CD4-positive, alpha-beta memory T cell (primary cell): ENCODE measurements at regions of chr2 and their contacts with region 1.

Region 1: DNA sequence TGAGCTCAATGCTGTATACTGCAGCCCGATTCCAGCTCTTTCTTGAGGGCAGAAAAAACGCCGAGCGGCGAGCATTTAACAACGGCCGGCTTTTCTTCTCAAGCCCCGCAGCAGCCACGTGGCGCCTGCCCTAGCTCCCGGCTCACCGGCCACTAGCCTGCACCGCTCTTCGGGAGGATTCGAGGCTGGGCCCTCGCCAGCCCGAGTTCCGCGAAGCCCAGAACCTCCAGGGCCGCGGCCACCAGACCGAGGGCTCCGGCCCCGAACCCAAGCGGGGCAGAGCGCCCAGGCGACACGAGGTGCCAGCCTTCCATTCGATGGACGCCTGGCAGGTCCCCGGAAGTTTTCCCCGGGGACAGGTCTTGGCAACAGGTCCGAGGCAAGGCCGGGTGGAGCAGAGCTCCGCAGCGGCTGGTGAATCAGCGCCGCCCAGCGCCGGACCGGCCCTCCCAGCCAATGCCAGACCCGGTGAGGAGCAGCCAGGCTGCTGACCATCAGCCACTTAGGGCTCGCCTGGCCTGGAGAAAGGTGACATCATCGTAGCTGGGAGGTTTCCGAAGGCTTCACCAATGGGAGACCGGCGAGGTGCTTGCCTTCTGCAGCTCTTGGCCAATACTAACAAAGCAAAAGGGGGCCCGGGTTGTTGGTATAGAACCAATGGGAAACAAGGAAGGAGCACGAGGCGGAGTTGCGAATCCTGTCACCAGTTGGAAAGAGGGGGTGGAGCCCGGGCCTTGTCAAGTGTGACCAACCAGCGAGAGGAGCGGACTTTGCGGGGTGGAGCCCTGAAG is 544 bp upstream of the MXD1 start:
- DNase-seq: peak; percentile 99 to 100 (median 100)
- H3K4me3 ChIP-seq: peak overlapping the region; percentile 81 to 88
- H3K4me3 Mint-ChIP-seq: peak overlapping the region; percentile 85 to 89 (median 87)
- H3K27ac ChIP-seq: peak overlapping the region; percentile 96
- H3K27ac Mint-ChIP-seq: peak overlapping the region; percentile 90 to 96 (median 94)
- H3K4me1 ChIP-seq: peaks cover 30% of the 10 kb centered on the region
- H3K4me1 Mint-ChIP-seq: peaks cover 7 to 44% (median 19%) of the 10 kb centered on the region in 4 donors
- H3K27me3 ChIP-seq: no peaks in the 10 kb centered on the region
- H3K27me3 Mint-ChIP-seq: no peaks in the 10 kb centered on the region

Region 2: DNA sequence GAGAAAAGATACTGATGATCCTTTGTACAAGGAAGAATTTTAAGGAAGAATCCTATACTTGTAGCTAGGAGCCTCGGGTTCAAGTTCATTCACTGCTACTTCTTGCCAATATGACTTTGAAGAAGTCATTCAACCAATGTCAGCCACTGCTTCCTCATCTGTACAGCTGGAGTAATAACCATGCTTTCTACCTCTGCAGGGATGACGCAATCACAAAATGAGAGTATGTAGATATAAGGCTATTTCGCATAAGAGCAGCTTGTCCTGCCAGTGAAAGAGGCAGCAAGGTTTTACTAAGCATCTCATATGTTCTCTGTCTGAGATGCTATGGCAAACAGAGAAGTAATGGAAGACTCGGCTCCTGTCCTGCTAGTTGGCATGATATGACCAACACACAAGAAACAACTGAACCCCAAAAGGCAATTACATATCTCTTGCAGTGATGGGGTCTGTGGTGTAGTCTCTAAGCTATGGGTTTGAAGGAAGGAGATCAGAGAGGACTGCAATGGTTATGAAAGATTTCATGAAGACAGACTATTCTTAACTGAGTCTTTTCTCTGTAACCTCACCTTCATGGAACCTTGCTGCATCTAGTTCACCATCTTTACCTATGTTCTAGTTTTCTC is 280.1 kb before region 1 on chr2:
- CTCF ChIA-PET with region 1: no interaction called
- POLR2A ChIA-PET with region 1: no interaction called
- intact Hi-C with region 1: no loop called
- DNase-seq: no peak
- H3K4me3 ChIP-seq: no peak overlapping the region
- H3K4me3 Mint-ChIP-seq: peak overlapping the region in 4 of 8 donors; percentile 18 to 52 (median 30)
- H3K27ac ChIP-seq: no peak overlapping the region
- H3K27ac Mint-ChIP-seq: peak overlapping the region in 5 of 7 donors; percentile 9 to 75 (median 38)
- H3K4me1 ChIP-seq: peaks cover 92% of the 10 kb centered on the region
- H3K4me1 Mint-ChIP-seq: peaks cover 56 to 63% (median 58%) of the 10 kb centered on the region in 4 donors
- H3K27me3 ChIP-seq: no peaks in the 10 kb centered on the region
- H3K27me3 Mint-ChIP-seq: no peaks in the 10 kb centered on the region

Region 3: DNA sequence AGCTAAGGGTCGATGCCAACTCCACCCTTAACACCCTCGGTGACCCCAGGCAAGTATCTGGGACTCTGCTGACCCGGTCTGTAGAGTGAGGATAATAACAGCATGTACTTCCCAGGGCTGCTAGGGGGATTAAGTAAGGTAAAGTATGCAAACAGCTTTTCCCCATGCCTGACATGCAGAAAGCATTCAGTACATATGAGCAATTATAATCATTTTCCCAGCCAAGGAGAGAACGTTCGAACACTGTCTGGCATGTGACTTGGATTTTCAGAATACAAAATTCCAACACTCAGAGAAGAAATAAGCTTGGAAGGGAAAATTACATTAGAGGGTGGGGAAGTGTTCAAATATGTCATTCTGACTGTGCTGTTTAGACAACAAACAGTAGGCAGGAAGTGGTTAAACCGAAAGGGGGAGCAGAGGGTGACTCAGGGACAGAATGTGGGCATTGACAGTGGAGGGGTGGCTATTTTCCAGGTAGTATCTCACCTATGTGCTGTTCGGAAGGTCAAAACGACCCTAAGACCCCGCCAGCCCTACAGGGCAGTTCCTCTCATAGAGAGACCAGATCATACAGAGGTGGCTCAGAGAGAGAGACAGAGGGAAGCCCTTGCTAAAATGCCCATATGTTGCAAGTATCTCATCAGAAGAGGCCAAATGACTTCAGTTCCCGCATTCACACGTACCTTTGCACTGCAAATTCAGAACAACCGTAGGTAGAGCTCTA is 32.1 kb after region 1 on chr2:
- CTCF ChIA-PET with region 1: interaction called, 5 read pairs
- POLR2A ChIA-PET with region 1: interaction called, 40 read pairs
- intact Hi-C with region 1: no loop called
- DNase-seq: peak; percentile 50 to 79 (median 64)
- H3K4me3 ChIP-seq: peak overlapping the region in 1 of 2 donors; percentile 21
- H3K4me3 Mint-ChIP-seq: peak overlapping the region in 7 of 8 donors; percentile 47 to 82 (median 64)
- H3K27ac ChIP-seq: peak overlapping the region; percentile 39
- H3K27ac Mint-ChIP-seq: peak overlapping the region; percentile 87 to 96 (median 90)
- H3K4me1 ChIP-seq: peaks cover 26% of the 10 kb centered on the region
- H3K4me1 Mint-ChIP-seq: peaks cover 24 to 36% (median 31%) of the 10 kb centered on the region in 4 donors
- H3K27me3 ChIP-seq: no peaks in the 10 kb centered on the region
- H3K27me3 Mint-ChIP-seq: no peaks in the 10 kb centered on the region

Region 4: GRCh38 chr2:70078384-70078783 is 164.0 kb after region 1 on chr2:
- CTCF ChIA-PET with region 1: interaction called, 17 read pairs
- POLR2A ChIA-PET with region 1: interaction called, 207 read pairs
- intact Hi-C with region 1: no loop called
- DNase-seq: no peak
- H3K4me3 ChIP-seq: no peak overlapping the region
- H3K4me3 Mint-ChIP-seq: peak overlapping the region in 4 of 8 donors; percentile 17 to 53 (median 44)
- H3K27ac ChIP-seq: no peak overlapping the region
- H3K27ac Mint-ChIP-seq: peak overlapping the region in 6 of 7 donors; percentile 12 to 79 (median 65)
- H3K4me1 ChIP-seq: peaks cover 31% of the 10 kb centered on the region
- H3K4me1 Mint-ChIP-seq: peaks cover 25 to 45% (median 36%) of the 10 kb centered on the region in 4 donors
- H3K27me3 ChIP-seq: no peaks in the 10 kb centered on the region
- H3K27me3 Mint-ChIP-seq: no peaks in the 10 kb centered on the region

Region 5: DNA sequence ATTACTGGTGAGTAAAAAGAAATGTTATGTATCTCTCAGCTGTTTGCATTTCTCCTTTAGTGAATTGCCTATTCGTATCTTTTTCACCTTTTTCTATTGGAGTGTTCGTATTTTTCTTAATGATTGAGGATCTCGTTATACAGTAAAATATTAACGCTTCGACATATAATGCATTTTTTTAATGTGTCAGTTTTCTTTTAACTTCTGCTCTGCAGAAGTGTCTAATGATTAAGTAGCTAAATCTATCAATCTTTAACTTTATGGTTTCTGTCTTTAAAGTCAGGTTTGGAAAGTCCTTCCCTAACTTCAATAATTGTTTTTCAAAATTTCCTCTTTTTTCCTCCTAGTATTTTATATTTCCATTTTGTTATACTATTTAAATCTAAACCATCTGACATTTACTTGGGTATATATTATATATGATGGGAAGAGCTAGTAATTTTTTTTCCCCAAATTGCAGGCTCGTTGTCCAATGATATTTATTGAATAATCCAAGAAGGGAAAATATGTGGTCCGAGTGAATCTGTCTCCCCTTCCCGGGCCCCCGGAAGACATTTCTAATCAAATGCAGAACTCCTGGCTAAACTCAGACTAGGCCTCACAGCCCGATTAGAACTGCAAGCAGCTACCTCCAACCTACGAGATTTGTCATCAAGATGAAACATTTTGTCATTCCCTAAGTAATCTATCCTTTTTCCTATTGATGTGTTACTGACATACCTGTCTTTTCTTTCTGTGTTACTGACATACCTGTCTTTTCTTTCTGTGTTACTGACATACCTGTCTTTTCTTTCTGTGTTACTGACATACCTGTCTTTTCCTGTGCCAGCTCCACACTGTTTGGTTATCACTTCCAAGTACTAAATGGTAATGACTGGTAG is 190.1 kb after region 1 on chr2:
- CTCF ChIA-PET with region 1: interaction called, 4 read pairs
- POLR2A ChIA-PET with region 1: interaction called, 15 read pairs
- intact Hi-C with region 1: no loop called
- DNase-seq: peak in 2 of 5 donors; percentile 32
- H3K4me3 ChIP-seq: peak overlapping the region in 1 of 2 donors; percentile 23
- H3K4me3 Mint-ChIP-seq: peak overlapping the region; percentile 62 to 82 (median 78)
- H3K27ac ChIP-seq: peak overlapping the region; percentile 57
- H3K27ac Mint-ChIP-seq: peak overlapping the region; percentile 87 to 95 (median 94)
- H3K4me1 ChIP-seq: peaks cover 47% of the 10 kb centered on the region
- H3K4me1 Mint-ChIP-seq: peaks cover 31 to 61% (median 46%) of the 10 kb centered on the region in 4 donors
- H3K27me3 ChIP-seq: no peaks in the 10 kb centered on the region
- H3K27me3 Mint-ChIP-seq: no peaks in the 10 kb centered on the region

Region 6: DNA sequence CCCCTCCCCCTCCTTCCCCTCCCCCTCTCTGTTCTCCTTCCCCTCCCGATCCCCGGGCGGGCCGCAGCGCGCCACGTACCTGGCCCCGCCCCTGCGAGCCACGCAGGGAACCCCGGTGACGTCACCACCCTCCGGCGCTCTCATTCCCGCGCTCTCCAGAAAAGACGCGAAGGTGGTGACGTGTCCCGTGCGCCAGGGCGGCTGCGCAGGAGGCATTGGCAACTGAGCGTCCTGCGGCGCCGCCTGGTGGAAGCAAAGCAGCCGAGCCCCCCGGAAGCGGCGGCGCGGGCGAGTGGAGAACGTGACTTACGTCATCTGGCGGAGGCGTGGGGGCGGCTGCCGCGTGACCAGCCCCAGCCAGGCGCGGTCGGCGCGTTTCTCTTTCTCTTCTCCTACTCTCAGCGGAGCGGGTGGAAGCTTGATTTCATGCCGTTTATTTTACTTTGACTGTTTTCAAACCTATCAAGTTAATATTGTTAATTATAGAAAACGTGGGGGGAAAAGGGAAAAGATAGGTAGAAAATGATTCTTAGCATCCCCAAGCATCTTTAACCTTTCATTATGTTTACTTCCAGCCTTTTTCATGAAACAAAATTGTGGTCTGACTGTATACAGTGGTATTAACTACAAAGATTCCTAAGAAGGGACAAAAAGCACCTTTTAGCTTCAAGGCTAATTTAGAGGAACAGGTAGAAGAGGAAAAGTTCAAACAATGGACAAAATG is 228.4 kb after region 1 on chr2:
- CTCF ChIA-PET with region 1: interaction called, 86 read pairs
- POLR2A ChIA-PET with region 1: interaction called, 180 read pairs
- intact Hi-C with region 1: loop called (anchors 1 kb)
- DNase-seq: peak; percentile 99 to 100 (median 100)
- H3K4me3 ChIP-seq: peak overlapping the region in 1 of 2 donors; percentile 67
- H3K4me3 Mint-ChIP-seq: peak overlapping the region; percentile 85 to 96 (median 90)
- H3K27ac ChIP-seq: peak overlapping the region; percentile 97
- H3K27ac Mint-ChIP-seq: peak overlapping the region; percentile 97 to 100 (median 100)
- H3K4me1 ChIP-seq: peaks cover 56% of the 10 kb centered on the region
- H3K4me1 Mint-ChIP-seq: peaks cover 38 to 67% (median 52%) of the 10 kb centered on the region in 4 donors
- H3K27me3 ChIP-seq: no peaks in the 10 kb centered on the region
- H3K27me3 Mint-ChIP-seq: peaks cover 0 to 2% of the 10 kb centered on the region in 2 donors

Region 7: DNA sequence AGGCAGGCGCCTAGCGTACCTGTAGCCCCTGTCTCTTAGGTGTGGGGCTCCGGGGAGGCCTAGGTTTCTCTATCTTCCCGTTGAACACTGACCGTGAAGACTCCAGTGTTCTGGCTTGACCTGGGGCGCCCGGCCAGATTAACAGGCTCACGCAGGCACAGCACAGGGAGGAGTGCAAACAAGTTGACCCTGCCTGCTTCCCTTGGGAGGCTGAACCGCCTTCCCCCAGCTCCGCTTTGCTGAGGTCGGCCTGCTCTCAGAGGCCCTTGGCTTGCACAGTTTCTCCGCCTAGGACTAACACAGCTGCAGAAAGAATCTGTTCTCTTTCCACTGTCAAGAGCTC is 344.1 kb after region 1 on chr2:
- CTCF ChIA-PET with region 1: interaction called, 21 read pairs
- POLR2A ChIA-PET with region 1: interaction called, 19 read pairs
- intact Hi-C with region 1: loop called (anchors 1 kb)
- DNase-seq: peak in 1 of 5 donors; percentile 39
- H3K4me3 ChIP-seq: peak overlapping the region; percentile 10 to 79
- H3K4me3 Mint-ChIP-seq: peak overlapping the region; percentile 87 to 97 (median 93)
- H3K27ac ChIP-seq: peak overlapping the region; percentile 57
- H3K27ac Mint-ChIP-seq: peak overlapping the region; percentile 8 to 86 (median 69)
- H3K4me1 ChIP-seq: peaks cover 17% of the 10 kb centered on the region
- H3K4me1 Mint-ChIP-seq: peaks cover 26 to 48% (median 36%) of the 10 kb centered on the region in 4 donors
- H3K27me3 ChIP-seq: no peaks in the 10 kb centered on the region
- H3K27me3 Mint-ChIP-seq: no peaks in the 10 kb centered on the region